ENCODE measurements at regions of chr12 and their contacts with region 1.

Region 1: GRCh38 chr12:110224379-110225304 is 56.4 kb upstream of the ATP2A2 start:
- DNase-seq: peak; percentile 74
- H3K4me3 ChIP-seq: peak overlapping the region; percentile 14 to 40 (median 36)
- H3K27ac ChIP-seq: peak overlapping the region; percentile 95
- H3K4me1 ChIP-seq: peaks cover 25% of the 10 kb centered on the region
- H3K27me3 ChIP-seq: no peaks in the 10 kb centered on the region
- CTCF ChIP-seq: peak; percentile 57 to 69

Region 2: DNA sequence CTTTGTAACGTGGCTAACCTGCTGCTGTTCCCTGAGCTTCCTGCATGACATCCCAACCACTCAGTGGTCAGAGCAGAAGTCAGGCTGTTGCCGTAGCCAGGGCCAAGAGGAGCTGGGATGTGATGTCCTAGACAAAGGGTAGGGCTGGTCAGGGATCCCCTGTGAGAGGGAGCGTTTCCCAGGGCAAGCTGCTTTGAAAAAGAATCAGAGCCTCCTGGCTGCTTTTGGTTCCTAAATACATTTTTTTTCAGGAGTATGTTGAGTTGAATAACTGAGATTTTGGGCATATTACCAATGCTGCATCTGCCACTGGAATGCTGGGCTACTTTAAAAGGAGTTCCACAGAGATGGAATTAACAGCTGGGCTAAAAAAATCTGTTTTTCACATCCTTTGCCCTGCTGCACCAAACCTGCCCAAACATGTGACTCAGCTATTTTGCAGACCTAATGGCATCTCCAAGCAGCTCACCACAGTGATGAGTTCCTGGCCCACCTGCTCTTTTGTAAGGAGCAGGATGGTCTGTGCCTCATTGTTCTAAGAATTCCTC is 201.5 kb before region 1 on chr12:
- CTCF ChIA-PET with region 1: no interaction called
- dilution Hi-C with region 1: no loop called
- in situ Hi-C with region 1: no loop called
- intact Hi-C with region 1: no loop called
- DNase-seq: peak; percentile 21
- H3K4me3 ChIP-seq: no peak overlapping the region
- H3K27ac ChIP-seq: peak overlapping the region; percentile 22
- H3K4me1 ChIP-seq: peaks cover 25% of the 10 kb centered on the region
- H3K27me3 ChIP-seq: no peaks in the 10 kb centered on the region
- CTCF ChIP-seq: no peak

Region 3: DNA sequence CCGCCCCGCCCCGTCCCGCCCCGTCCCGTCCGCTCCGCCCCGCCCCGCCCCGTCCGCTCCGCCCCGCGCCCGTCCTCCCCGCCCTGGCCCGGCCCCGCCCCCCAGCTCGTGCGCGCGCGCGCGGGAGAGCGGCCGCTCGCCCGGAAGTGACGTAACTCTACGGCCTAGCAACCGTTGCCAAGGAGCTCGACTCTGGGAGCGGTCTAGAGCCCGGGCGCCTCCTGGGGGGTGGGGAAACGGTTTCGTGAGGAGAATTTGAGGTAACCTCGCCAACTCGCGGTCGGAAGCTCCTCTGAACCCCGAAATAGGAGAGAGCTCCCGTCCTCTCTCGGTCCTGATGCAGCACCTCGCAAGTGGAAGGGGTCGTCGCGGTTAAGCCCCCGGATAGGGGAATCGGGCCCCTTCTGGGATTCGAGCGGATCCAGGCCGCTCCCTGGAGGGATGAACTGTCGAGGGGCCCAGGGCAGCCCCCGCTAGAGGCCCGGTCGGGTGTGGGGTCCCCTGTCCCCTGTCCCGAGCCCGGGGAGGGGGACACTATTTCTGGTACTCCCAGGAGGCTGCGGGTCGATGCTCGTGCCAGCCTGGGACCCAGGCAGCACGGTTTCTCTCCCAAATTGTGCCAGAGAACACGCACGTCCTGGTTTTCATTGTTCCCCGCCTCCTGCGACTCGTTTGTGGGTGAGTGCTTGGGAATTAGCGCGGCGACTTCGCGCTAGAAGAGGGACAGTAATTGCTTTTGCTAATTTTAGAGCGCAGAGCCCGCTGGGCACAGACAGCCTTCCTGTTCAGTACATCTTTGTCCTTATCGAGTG is 100.3 kb before region 1 on chr12 and contains the start of gene IFT81:
- CTCF ChIA-PET with region 1: no interaction called
- dilution Hi-C with region 1: no loop called
- in situ Hi-C with region 1: no loop called
- intact Hi-C with region 1: loop called (anchors 5 kb)
- DNase-seq: peak; percentile 91
- H3K4me3 ChIP-seq: peak within 1 kb of the TSS; percentile 82 to 98 (median 89)
- H3K27ac ChIP-seq: peak within 1 kb of the TSS; percentile 99
- H3K4me1 ChIP-seq: no peaks in the 10 kb centered on the region
- H3K27me3 ChIP-seq: no peaks in the 10 kb centered on the region
- CTCF ChIP-seq: peak in 1 of 2 donors; percentile 11
- total RNA-seq, gene IFT81: 8.8 to 11.8 TPM

Region 4: DNA sequence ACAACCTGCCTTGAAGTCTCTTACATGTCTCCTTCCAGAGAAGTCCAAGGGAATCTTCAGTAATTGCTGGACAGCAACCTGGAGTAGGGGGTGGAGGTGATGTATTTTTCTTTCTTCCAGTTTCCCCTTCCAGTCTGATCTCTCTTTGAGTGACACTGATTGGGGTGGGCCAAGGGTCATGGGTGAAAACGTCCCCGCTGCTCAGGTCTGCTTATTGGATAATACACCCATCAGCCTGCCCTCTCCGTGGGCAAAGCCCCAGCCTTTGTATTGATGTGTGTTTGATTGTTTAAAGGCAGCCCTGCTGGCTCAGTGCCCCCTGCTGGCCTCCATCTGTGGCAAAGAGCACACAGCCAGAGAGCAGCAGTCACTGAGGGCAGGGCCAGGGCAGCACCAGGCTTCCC is 20.7 kb after region 1 on chr12:
- CTCF ChIA-PET with region 1: no interaction called
- dilution Hi-C with region 1: no loop called
- in situ Hi-C with region 1: no loop called
- intact Hi-C with region 1: loop called (anchors 1 kb)
- DNase-seq: no peak
- H3K4me3 ChIP-seq: no peak overlapping the region
- H3K27ac ChIP-seq: no peak overlapping the region
- H3K4me1 ChIP-seq: peaks cover 39% of the 10 kb centered on the region
- H3K27me3 ChIP-seq: no peaks in the 10 kb centered on the region
- CTCF ChIP-seq: peak; percentile 41 to 51

Region 5: GRCh38 chr12:110338754-110339153 is 114.1 kb after region 1 on chr12:
- CTCF ChIA-PET with region 1: no interaction called
- dilution Hi-C with region 1: no loop called
- in situ Hi-C with region 1: no loop called
- intact Hi-C with region 1: loop called (anchors 1 kb)
- DNase-seq: no peak
- H3K4me3 ChIP-seq: no peak overlapping the region
- H3K27ac ChIP-seq: no peak overlapping the region
- H3K4me1 ChIP-seq: peaks cover 24% of the 10 kb centered on the region
- H3K27me3 ChIP-seq: no peaks in the 10 kb centered on the region
- CTCF ChIP-seq: peak in 1 of 2 donors; percentile 8

Region 6: GRCh38 chr12:110403146-110403975 is 178.7 kb after region 1 on chr12 and contains the start of gene ANAPC7:
- CTCF ChIA-PET with region 1: no interaction called
- dilution Hi-C with region 1: no loop called
- in situ Hi-C with region 1: no loop called
- intact Hi-C with region 1: loop called (anchors 10 kb)
- DNase-seq: peak; percentile 85
- H3K4me3 ChIP-seq: peak within 1 kb of the TSS; percentile 86 to 95 (median 89)
- H3K27ac ChIP-seq: peak within 1 kb of the TSS; percentile 98
- H3K4me1 ChIP-seq: peaks cover 7% of the 10 kb centered on the region
- H3K27me3 ChIP-seq: no peaks in the 10 kb centered on the region
- CTCF ChIP-seq: peak in 1 of 2 donors; percentile 14
- total RNA-seq, gene ANAPC7: 35.8 to 63.7 TPM